ENCODE measurements at regions of chr12 and their contacts with region 1.

Region 1: GRCh38 chr12:117069926-117070900 is 29.0 kb downstream of the TESC start:
- DNase-seq: no peak
- H3K4me3 Mint-ChIP-seq: no peak overlapping the region
- H3K27ac Mint-ChIP-seq: no peak overlapping the region
- H3K4me1 Mint-ChIP-seq: peaks cover 22% of the 10 kb centered on the region
- H3K27me3 Mint-ChIP-seq: no peaks in the 10 kb centered on the region

Region 2: DNA sequence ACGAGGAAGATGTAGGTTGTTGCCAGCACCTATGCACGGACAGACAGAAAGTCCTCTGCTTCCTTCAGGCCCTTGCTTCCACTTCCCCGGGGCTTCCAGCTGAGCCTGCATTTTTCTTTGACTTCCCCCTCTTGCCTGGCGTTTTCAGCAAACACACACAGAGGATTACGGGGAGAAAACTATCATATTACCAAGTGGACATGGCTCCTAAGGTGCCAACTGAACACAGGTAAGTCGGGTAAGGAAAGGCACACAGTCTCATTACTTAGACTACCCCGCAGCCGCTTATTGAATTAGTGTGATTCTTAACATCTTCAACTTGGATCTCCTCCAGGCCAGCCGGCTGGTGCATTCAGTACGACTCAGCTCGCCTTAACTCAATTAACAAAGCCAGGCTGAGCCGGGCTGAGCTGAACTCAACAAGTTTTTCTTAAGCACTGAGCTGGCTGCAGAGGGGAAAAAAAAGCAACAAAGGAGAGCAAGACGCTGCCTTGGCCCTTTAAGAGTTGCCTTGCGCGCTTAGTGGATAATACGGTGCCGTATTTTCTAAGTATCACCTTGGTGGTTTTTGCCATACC is 530.2 kb before region 1 on chr12:
- intact Hi-C with region 1: no loop called
- DNase-seq: no peak
- H3K4me3 Mint-ChIP-seq: no peak overlapping the region
- H3K27ac Mint-ChIP-seq: no peak overlapping the region
- H3K4me1 Mint-ChIP-seq: peaks cover 37% of the 10 kb centered on the region
- H3K27me3 Mint-ChIP-seq: peaks cover 7% of the 10 kb centered on the region

Region 3: DNA sequence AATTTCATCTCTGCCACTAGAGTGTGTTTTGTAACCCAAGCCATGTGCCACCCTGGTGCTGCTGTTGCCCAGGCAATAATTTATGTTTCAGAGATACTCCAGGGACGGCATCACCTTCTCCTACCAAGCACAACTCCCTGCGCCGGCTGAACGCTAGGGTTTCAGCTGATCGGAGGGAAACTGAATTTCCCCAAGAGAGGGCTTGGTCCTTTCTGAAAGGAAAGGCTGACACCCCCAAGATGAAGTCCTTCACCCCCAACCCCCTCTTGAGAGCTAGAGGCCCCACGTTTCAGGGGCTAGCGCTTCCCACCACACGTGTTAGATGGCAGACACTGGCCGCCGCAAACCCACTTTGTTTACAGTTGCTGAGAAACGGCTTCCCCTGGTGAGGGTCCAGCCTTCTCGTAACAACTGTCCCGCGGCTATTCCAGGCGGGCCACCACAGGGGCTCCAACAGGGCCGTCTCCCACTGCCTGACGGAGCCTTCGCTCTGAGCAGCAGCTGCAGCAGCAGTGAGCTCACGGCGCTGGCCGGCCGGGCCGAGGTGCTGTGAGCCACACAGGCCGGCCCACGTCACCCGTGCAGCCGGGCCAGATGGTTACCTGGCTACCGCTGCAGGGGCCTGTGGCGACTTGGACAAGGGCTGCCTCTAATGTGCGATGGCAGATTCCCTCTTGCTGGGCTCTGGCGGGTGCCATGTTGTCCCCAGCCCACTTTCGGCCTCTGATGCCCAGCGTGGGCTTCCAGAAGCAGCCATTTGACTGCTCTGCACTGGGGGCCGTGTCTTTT is 37.4 kb before region 1 on chr12:
- intact Hi-C with region 1: loop called (anchors 5 kb)
- DNase-seq: no peak
- H3K4me3 Mint-ChIP-seq: no peak overlapping the region
- H3K27ac Mint-ChIP-seq: no peak overlapping the region
- H3K4me1 Mint-ChIP-seq: no peaks in the 10 kb centered on the region
- H3K27me3 Mint-ChIP-seq: no peaks in the 10 kb centered on the region

Measured in activated T-helper 1 cell treated with anti-CD3 and anti-CD28 coated beads, Interleukin-12 subunit alpha, Interleukin-12 subunit beta, Interleukin-2, Interleukin-4 antibody, amounts not matched to agents 30 ng/mL and 10 ng/mL and 1 ng/mL, durations not matched to agents 14 hours and 24 hours and 36 hours (primary cell).